ENCODE measurements at regions of chr14 and their contacts with region 1.

Region 1: GRCh38 chr14:75340921-75341320 is 62.3 kb downstream of the FOS start:
- DNase-seq: peak; percentile 93 to 97
- ATAC-seq: peak; percentile 89 to 93 (median 92)
- H3K4me3 ChIP-seq: peak overlapping the region; percentile 51
- H3K27ac ChIP-seq: peak overlapping the region; percentile 92
- H3K4me1 ChIP-seq: peaks cover 41% of the 10 kb centered on the region
- H3K27me3 ChIP-seq: no peaks in the 10 kb centered on the region
- CTCF ChIP-seq: no peak

Region 2: GRCh38 chr14:75409316-75410205 is 68.6 kb after region 1 on chr14:
- intact Hi-C with region 1: loop called in 1 of 2 experiments (anchors 2 kb)
- DNase-seq: peak; percentile 47 to 86
- ATAC-seq: peak; percentile 95 to 98 (median 98)
- H3K4me3 ChIP-seq: no peak overlapping the region
- H3K27ac ChIP-seq: peak overlapping the region; percentile 73
- H3K4me1 ChIP-seq: peaks cover 4% of the 10 kb centered on the region
- H3K27me3 ChIP-seq: no peaks in the 10 kb centered on the region
- CTCF ChIP-seq: peak; percentile 35

Region 3: DNA sequence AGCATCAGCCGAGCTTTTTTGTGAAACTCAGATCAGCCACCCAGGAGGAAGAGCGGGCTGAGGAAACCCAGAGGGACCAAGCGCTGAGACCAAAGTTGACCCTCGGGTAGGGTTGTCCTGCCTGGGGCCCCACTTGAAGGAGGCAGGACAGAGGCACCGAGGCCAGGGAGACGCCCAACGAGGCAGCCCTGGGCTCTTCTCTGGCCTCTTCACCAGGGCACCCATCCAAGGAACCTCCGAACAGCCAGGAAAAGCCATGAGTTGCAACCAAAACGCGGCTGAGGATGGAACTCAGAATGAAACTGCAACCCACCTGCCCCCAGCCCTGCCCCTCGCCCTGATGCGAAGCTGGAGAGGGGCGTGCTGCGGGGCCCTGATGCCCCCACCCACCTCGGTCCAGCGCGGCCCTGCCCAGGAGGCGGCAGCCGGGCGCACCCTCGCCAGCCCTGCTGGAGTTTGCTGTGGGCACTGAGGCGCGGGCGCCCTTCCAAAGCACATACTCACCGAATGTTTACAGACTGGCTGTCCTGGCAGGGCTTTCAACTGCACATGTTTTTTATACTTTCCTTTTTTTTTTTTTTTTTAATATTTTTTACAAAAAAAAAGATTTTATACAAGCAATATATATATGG is 128.8 kb after region 1 on chr14:
- intact Hi-C with region 1: no loop called
- DNase-seq: peak in 1 of 2 donors; percentile 48
- ATAC-seq: peak; percentile 17 to 69 (median 24)
- H3K4me3 ChIP-seq: no peak overlapping the region
- H3K27ac ChIP-seq: peak overlapping the region; percentile 71
- H3K4me1 ChIP-seq: peaks cover 48% of the 10 kb centered on the region
- H3K27me3 ChIP-seq: no peaks in the 10 kb centered on the region
- CTCF ChIP-seq: no peak

Measured in psoas muscle (tissue), 8 donors.